ENCODE measurements at regions of chrX and their contacts with region 1.

Region 1: GRCh38 chrX:120452131-120452530 is 17.0 kb downstream of the LAMP2 start:
- DNase-seq: peak; percentile 26
- ATAC-seq: no peak; the same call in 1 of the 2 replicates
- H3K4me3 ChIP-seq: no peak overlapping the region
- H3K27ac ChIP-seq: no peak overlapping the region
- H3K4me1 ChIP-seq: no peaks in the 10 kb centered on the region
- H3K27me3 ChIP-seq: no peaks in the 10 kb centered on the region
- CTCF ChIP-seq: peak; percentile 24
- POLR2A ChIP-seq: no peak
- RAD21 ChIP-seq: peak; percentile 22; the same call in 1 of the 2 replicates

Region 2: GRCh38 chrX:119852382-119853353 is 599.5 kb before region 1 on chrX and contains the start of gene UPF3B:
- CTCF ChIA-PET with region 1: no interaction called
- POLR2A ChIA-PET with region 1: no interaction called
- dilution Hi-C with region 1: no loop called
- in situ Hi-C with region 1: no loop called
- intact Hi-C with region 1: no loop called
- DNase-seq: peak; percentile 98
- ATAC-seq: peak; percentile 97
- H3K4me3 ChIP-seq: peak within 1 kb of the TSS; percentile 82
- H3K27ac ChIP-seq: peak within 1 kb of the TSS; percentile 86
- H3K4me1 ChIP-seq: no peaks in the 10 kb centered on the region
- H3K27me3 ChIP-seq: no peaks in the 10 kb centered on the region
- CTCF ChIP-seq: no peak
- POLR2A ChIP-seq: peak; percentile 65; the same call in 1 of the 2 replicates
- RAD21 ChIP-seq: no peak
- total RNA-seq, gene UPF3B: 0.54 and 1.4 TPM in 2 replicates

Region 3: GRCh38 chrX:120111611-120112010 is 340.5 kb before region 1 on chrX:
- CTCF ChIA-PET with region 1: no interaction called
- POLR2A ChIA-PET with region 1: no interaction called
- dilution Hi-C with region 1: no loop called
- in situ Hi-C with region 1: no loop called
- intact Hi-C with region 1: no loop called
- DNase-seq: no peak
- ATAC-seq: no peak
- H3K4me3 ChIP-seq: no peak overlapping the region
- H3K27ac ChIP-seq: no peak overlapping the region
- H3K4me1 ChIP-seq: no peaks in the 10 kb centered on the region
- H3K27me3 ChIP-seq: no peaks in the 10 kb centered on the region
- CTCF ChIP-seq: no peak
- POLR2A ChIP-seq: no peak
- RAD21 ChIP-seq: no peak

Region 4: GRCh38 chrX:120463241-120463640 is 11.1 kb after region 1 on chrX:
- CTCF ChIA-PET with region 1: interaction called, 11 read pairs
- POLR2A ChIA-PET with region 1: no interaction called
- dilution Hi-C with region 1: no loop called
- in situ Hi-C with region 1: no loop called
- intact Hi-C with region 1: no loop called
- DNase-seq: peak; percentile 45
- ATAC-seq: no peak
- H3K4me3 ChIP-seq: no peak overlapping the region
- H3K27ac ChIP-seq: no peak overlapping the region
- H3K4me1 ChIP-seq: no peaks in the 10 kb centered on the region
- H3K27me3 ChIP-seq: no peaks in the 10 kb centered on the region
- CTCF ChIP-seq: no peak
- POLR2A ChIP-seq: no peak
- RAD21 ChIP-seq: no peak